ENCODE measurements at regions of chr6 and their contacts with region 1.

Region 1: GRCh38 chr6:36499918-36500317 is 47.4 kb downstream of the STK38 start:
- DNase-seq: no peak
- H3K4me3 ChIP-seq: no peak overlapping the region
- CTCF ChIP-seq: no peak

Region 2: DNA sequence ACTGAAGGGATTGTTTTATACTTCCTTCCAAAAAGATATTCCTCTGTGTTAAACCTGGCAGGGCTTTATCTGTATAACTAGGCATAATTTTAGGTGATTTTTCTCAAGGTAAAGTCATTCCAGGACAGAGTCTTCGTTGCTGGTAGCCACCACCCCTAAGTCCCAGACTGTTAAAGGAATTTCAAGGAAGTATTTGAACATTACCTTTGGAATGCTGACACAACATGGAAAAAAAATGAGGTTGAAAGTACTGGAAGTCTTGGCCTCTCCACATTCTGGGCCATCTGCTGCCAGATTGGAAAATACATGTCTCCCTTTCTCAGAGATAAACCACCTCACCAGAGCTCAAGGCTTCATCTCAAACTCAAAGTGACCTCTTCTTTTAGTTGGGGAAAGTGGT is 85.4 kb before region 1 on chr6:
- CTCF ChIA-PET with region 1: no interaction called
- POLR2A ChIA-PET with region 1: no interaction called
- DNase-seq: no peak
- H3K4me3 ChIP-seq: no peak overlapping the region
- CTCF ChIP-seq: no peak

Region 3: GRCh38 chr6:36519352-36519751 is 19.4 kb after region 1 on chr6:
- CTCF ChIA-PET with region 1: interaction called, 12 read pairs
- POLR2A ChIA-PET with region 1: no interaction called
- DNase-seq: no peak
- H3K4me3 ChIP-seq: no peak overlapping the region
- CTCF ChIP-seq: no peak

Measured in AG04449 (cell line).